ENCODE measurements at regions of chr10 and their contacts with region 1.

Region 1: GRCh38 chr10:102835007-102835482 is 2.2 kb downstream of the CYP17A1 start:
- DNase-seq: peak; percentile 73
- ATAC-seq: peak; percentile 95

Region 2: GRCh38 chr10:102904346-102904745 is 69.3 kb after region 1 on chr10:
- intact Hi-C with region 1: loop called (anchors 2 kb)
- DNase-seq: no peak
- ATAC-seq: no peak

Region 3: GRCh38 chr10:103069453-103070331 is 234.6 kb after region 1 on chr10:
- intact Hi-C with region 1: loop called (anchors 1 kb)
- DNase-seq: no peak
- ATAC-seq: peak; percentile 71

Measured in Right ventricle myocardium inferior (tissue), 1 donor.